ENCODE measurements at regions of chr17 and their contacts with region 1.

Region 1: DNA sequence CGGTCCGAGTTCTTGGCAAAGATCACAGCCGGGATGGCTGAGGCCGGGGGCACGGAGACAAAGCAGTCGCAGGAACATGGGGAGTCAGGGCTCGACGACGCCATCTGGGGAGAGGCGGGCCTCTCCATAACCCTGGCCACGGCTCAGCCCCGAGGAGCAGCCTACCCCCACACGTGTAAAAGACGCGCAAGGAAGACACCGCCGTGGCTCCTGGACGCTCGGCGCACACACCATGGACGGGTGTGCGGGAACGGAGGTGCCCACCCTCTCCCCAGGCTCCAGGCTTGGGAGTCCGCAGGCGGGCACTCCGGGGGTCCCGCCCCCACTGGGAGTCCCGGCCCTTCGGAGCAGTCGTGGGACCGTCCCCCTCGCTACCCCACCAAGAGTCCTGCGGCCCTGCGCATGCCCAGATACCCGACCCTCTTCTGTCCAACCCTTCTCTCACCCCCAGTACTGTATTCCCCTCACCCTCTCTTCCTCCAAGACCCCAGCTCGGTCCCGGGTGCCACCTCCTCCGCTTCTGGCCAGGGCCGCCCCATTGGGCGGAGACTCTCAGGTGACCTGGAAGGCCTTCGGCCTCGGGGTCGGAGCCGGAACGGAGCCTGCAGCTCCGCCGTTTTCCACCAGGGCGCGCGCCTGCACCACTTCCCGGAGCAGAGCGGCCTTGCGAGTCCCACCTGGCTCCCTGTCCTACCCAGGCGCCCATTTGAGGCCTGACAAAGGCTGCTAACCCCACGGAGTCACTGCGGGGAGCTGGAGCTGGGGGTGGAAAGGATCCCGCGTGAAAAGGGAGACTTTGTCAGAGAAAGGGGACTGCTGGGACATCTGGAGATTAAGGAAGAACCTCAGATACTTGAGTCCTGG is at the start of gene SCRN2:
- DNase-seq: peak; percentile 86
- H3K4me3 Mint-ChIP-seq: peak within 1 kb of the TSS; percentile 96
- H3K27ac Mint-ChIP-seq: peak within 1 kb of the TSS; percentile 96
- H3K4me1 Mint-ChIP-seq: peaks cover 28% of the 10 kb centered on the region
- H3K27me3 Mint-ChIP-seq: peaks cover 16% of the 10 kb centered on the region
- total RNA-seq, gene SCRN2: 24.5 and 26.3 TPM in 2 replicates

Region 2: DNA sequence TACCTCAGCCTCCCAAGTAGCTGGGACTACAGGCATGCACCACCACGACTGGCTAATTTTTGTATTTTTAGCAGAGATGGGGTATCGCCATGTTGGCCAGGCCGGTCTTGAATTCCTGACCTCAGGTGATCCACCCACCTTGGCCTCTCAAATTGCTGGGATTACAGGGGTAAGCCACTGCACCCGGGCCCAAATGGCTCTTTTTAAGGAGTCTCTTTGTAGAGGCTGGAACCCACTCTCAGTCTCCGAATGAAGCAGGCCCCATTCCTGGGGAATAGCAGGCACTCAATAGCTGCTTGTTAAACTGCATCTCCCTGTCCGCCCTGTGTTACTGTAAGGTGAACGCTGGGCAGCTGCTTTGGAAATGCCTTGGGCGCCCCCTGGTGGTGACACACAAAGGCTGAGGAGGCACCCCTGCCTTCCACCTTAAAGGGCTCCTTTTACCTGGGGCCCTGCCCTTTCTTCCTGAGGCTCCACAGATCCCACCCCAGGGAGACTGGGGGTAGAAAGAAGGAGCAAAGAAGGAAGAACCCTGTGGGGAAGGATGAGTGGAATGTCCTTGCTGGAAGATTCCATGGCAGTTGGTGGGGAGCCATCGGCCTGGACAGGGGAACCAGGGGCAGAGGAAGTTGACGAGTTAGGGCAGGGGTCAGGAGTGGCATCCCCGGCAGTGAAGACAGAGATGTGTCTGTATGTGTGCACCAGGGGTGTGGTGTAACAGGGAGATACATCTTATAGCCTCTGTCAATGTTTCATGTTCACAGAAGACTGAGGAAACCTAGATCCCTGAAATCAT is 49.0 kb after region 1 on chr17:
- intact Hi-C with region 1: loop called (anchors 1 kb)
- DNase-seq: peak; percentile 82
- H3K4me3 Mint-ChIP-seq: peak overlapping the region; percentile 57
- H3K27ac Mint-ChIP-seq: peak overlapping the region; percentile 1
- H3K4me1 Mint-ChIP-seq: peaks cover 31% of the 10 kb centered on the region
- H3K27me3 Mint-ChIP-seq: no peaks in the 10 kb centered on the region

Region 3: GRCh38 chr17:47949136-47949759 is 108.3 kb after region 1 on chr17:
- intact Hi-C with region 1: loop called (anchors 1 kb)
- DNase-seq: peak; percentile 76
- H3K4me3 Mint-ChIP-seq: peak overlapping the region; percentile 70
- H3K27ac Mint-ChIP-seq: peak overlapping the region; percentile 76
- H3K4me1 Mint-ChIP-seq: peaks cover 41% of the 10 kb centered on the region
- H3K27me3 Mint-ChIP-seq: no peaks in the 10 kb centered on the region

Region 4: DNA sequence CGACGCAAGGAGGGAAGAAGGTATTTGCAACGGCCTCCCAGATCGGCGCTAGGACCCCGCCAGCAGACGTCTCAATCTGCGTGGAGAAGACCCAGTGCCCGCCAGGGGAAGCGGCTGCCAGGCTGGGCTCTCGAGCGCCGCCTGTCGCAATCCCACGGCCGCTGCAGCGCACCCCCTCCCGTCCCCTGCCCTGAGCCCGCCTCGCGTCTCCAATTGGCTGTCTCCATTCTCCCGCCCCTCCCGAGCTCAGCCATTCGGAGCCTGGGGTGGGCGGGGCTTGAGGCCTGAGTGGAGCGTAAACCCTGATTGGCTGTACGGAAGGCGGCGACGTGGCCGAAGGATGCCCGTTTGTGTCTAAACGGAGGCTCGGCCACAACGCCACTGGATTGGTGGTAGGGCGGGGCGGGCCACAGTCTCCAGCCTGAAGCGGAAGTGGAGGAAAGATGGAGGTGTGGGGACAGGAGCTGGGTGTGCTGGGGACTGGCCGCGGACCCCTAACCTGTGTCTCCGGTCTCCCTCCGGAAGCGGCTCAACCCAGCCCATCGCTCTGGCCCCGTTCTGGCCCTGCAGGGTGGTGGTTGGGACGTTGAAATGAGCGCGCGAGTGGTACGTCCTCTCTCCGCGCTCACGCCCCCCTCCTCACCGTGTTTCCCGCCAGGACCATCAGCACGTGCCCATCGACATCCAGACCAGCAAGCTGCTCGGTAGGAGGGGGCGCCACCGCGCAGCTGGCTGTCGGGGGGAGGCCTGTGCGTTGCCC is 129.9 kb after region 1 on chr17 and contains the start of gene CDK5RAP3:
- intact Hi-C with region 1: loop called (anchors 1 kb)
- DNase-seq: peak; percentile 100
- H3K4me3 Mint-ChIP-seq: peak within 1 kb of the TSS; percentile 89
- H3K27ac Mint-ChIP-seq: peak within 1 kb of the TSS; percentile 93
- H3K4me1 Mint-ChIP-seq: peaks cover 31% of the 10 kb centered on the region
- H3K27me3 Mint-ChIP-seq: peaks cover 2% of the 10 kb centered on the region
- total RNA-seq, gene CDK5RAP3: 190 and 200 TPM in 2 replicates

Measured in activated T-helper 1 cell treated with anti-CD3 and anti-CD28 coated beads, Interleukin-12 subunit alpha, Interleukin-12 subunit beta, Interleukin-2, Interleukin-4 antibody, amounts not matched to agents 30 ng/mL and 10 ng/mL and 1 ng/mL, durations not matched to agents 14 hours and 24 hours and 36 hours (primary cell).